A673 (cell line): ENCODE measurements at regions of chr4 and their contacts with region 1.

Region 1: DNA sequence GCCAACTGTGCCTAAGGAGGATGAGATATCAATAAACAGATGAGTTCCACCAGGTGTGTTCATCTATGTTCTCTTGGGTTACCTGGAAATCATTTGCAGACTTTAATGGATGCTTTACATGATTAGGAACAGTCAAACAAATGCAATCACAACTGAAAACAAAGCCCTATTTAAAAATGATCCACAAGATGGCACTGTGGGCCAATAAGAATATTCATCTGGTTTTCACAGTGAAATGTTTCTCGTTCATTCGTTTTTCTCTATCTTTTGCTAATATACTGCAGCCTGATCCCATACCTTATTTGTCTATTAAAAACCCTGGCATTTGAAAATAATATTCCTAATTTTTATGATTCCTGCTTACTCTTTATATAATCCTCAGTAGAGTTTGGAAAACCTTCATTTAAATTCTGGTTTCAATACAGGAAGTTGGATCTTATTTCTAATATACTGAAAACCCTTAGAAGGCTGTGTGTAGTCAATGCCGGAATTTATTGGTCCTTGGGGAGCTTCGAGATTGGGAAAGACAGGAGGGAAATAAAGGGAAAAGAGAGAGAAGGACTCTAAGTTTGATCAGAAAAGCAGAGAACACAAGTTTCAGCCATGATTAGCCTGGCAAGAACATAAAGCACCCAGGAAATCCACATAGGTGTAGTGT is 63.8 kb upstream of the TAPT1 start:
- DNase-seq: peak; percentile 86
- H3K4me3 ChIP-seq: peak overlapping the region; percentile 18
- H3K27ac ChIP-seq: peak overlapping the region; percentile 56
- H3K4me1 ChIP-seq: peaks cover 23% of the 10 kb centered on the region
- H3K27me3 ChIP-seq: no peaks in the 10 kb centered on the region
- CTCF ChIP-seq: peak; percentile 71

Region 2: GRCh38 chr4:15001869-15002658 is 1288.0 kb before region 1 on chr4 and contains the start of gene CPEB2:
- CTCF ChIA-PET with region 1: no interaction called
- POLR2A ChIA-PET with region 1: no interaction called
- intact Hi-C with region 1: no loop called
- DNase-seq: peak; percentile 98
- H3K4me3 ChIP-seq: peak within 1 kb of the TSS; percentile 88
- H3K27ac ChIP-seq: peak within 1 kb of the TSS; percentile 100
- H3K4me1 ChIP-seq: peaks cover 17% of the 10 kb centered on the region
- H3K27me3 ChIP-seq: no peaks in the 10 kb centered on the region
- CTCF ChIP-seq: no peak
- total RNA-seq, gene CPEB2: 75.5 and 80.1 TPM in 2 replicates

Region 3: GRCh38 chr4:15778289-15779241 is 511.5 kb before region 1 on chr4 and contains the start of gene CD38:
- CTCF ChIA-PET with region 1: no interaction called
- POLR2A ChIA-PET with region 1: no interaction called
- intact Hi-C with region 1: no loop called
- DNase-seq: peak; percentile 13
- H3K4me3 ChIP-seq: peak within 1 kb of the TSS; percentile 48
- H3K27ac ChIP-seq: no peak within 1 kb of the TSS
- H3K4me1 ChIP-seq: no peaks in the 10 kb centered on the region
- H3K27me3 ChIP-seq: peaks cover 16% of the 10 kb centered on the region
- CTCF ChIP-seq: no peak
- total RNA-seq, gene CD38: not detected in 2 replicates

Region 4: DNA sequence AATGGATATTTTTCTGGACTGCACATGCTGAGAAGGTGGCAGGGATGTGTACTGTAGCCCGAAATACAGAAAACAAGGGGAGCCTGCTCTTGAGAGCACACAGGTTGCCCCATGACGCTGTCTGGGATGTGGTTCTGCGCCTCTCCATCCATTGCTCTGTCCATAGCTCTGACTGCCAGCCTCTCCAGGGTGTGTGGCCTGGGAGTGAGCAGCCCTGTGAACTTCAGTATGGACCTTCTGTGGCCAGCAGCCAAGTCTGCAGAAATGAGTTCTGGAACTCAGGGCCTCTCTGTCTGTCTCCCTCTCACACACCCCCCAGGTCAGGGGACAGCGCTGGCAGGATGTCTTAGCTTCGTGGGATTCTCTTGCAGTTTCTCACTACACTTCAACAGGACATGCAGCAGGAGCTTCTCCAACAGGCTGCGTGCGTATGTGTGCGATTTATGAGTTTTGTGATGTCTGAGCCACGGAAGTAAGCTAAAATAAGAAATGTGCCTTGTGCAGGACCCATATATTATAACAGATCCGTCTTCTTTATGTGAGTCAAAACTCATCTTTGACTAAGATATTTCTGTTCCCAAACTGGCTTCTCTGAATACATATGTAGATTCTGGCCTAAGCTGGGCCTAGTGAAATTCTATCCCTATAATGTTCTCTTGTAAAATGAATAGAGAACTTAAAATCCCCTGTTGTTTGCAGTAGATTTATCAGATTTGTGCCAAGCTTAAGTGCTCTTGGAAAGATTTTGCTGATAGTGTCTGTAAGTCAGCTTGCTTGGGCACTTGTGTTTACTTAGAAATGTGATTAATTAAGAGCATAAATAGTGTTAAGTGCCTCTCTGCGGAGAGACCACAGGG is 246.2 kb before region 1 on chr4:
- CTCF ChIA-PET with region 1: no interaction called
- POLR2A ChIA-PET with region 1: no interaction called
- intact Hi-C with region 1: no loop called
- DNase-seq: peak; percentile 58
- H3K4me3 ChIP-seq: no peak overlapping the region
- H3K27ac ChIP-seq: no peak overlapping the region
- H3K4me1 ChIP-seq: peaks cover 17% of the 10 kb centered on the region
- H3K27me3 ChIP-seq: no peaks in the 10 kb centered on the region
- CTCF ChIP-seq: no peak

Region 5: DNA sequence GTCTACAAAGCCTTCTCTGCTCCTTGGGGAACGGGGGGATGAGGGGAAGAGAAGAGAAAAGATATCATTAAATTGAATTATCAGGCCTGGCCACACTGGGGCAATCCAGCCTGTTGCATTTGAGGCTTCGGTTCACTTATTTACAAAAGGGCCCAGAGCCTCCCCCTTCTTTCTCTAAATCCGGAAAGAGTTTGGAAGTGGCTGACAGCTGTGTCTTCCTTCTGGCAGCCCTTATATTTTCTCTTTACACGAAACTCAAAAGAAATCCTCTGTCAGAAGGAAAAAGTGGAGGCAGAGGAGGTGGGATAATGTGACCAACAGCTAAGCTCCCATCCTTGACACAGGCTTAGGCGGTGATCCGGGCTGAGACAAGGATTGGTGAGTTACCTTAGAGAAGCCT is 94.5 kb after region 1 on chr4:
- CTCF ChIA-PET with region 1: no interaction called
- POLR2A ChIA-PET with region 1: no interaction called
- intact Hi-C with region 1: loop called (anchors 5 kb)
- DNase-seq: peak; percentile 84
- H3K4me3 ChIP-seq: no peak overlapping the region
- H3K27ac ChIP-seq: peak overlapping the region; percentile 92
- H3K4me1 ChIP-seq: peaks cover 54% of the 10 kb centered on the region
- H3K27me3 ChIP-seq: no peaks in the 10 kb centered on the region
- CTCF ChIP-seq: no peak

Region 6: GRCh38 chr4:16516796-16517439 is 226.9 kb after region 1 on chr4:
- CTCF ChIA-PET with region 1: no interaction called
- POLR2A ChIA-PET with region 1: no interaction called
- intact Hi-C with region 1: loop called (anchors 10 kb)
- DNase-seq: peak; percentile 91
- H3K4me3 ChIP-seq: no peak overlapping the region
- H3K27ac ChIP-seq: no peak overlapping the region
- H3K4me1 ChIP-seq: peaks cover 36% of the 10 kb centered on the region
- H3K27me3 ChIP-seq: no peaks in the 10 kb centered on the region
- CTCF ChIP-seq: peak; percentile 80

Region 7: DNA sequence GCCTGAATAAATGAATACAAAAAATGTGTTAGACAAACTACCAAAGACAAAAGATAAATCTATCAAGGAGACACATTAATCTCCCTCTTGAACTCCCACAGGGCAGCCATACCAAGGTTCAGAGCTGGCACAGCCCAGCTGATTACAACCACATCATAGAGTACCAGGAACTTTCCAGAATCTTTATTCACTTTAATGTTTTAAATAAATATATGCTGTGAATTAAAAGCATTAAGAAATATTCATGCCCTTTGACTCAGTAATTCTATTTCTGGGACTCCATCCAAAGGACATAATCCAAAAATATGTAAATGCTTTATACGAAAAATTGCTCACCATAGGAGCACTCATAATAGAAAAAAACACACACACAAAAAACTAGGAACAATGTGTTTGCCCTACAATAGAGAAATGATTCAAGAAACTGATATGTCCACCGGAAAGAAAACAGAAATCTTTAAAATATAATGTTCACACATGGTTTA is 482.4 kb after region 1 on chr4:
- CTCF ChIA-PET with region 1: no interaction called
- POLR2A ChIA-PET with region 1: no interaction called
- intact Hi-C with region 1: loop called (anchors 10 kb)
- DNase-seq: peak; percentile 65
- H3K4me3 ChIP-seq: no peak overlapping the region
- H3K27ac ChIP-seq: peak overlapping the region; percentile 46
- H3K4me1 ChIP-seq: peaks cover 37% of the 10 kb centered on the region
- H3K27me3 ChIP-seq: no peaks in the 10 kb centered on the region
- CTCF ChIP-seq: no peak

Region 8: GRCh38 chr4:17092736-17093437 is 802.9 kb after region 1 on chr4:
- CTCF ChIA-PET with region 1: no interaction called
- POLR2A ChIA-PET with region 1: no interaction called
- intact Hi-C with region 1: no loop called
- DNase-seq: peak; percentile 24
- H3K4me3 ChIP-seq: no peak overlapping the region
- H3K27ac ChIP-seq: peak overlapping the region; percentile 97
- H3K4me1 ChIP-seq: peaks cover 60% of the 10 kb centered on the region
- H3K27me3 ChIP-seq: no peaks in the 10 kb centered on the region
- CTCF ChIP-seq: no peak

Region 9: DNA sequence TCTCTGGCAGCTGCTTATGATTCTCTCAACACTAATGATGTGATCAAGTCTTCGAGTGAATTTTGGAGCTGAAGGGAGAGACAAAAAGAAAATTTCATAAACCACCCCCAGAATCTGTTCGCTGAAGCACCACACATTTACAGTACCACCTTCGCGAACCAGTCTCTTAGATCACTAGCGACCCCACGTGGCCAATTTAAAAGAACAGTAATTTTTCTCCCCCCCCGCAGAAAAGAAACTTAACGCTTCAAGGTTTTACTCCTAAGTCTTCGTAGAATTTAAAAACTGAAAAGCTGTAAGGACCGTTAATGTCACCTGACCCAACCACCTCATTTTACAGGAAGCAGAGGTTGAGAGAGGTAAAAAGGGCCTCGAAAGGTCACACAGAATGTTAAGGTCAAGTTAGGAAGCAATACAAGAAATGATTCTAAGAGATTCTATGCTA is 1034.4 kb after region 1 on chr4:
- CTCF ChIA-PET with region 1: no interaction called
- POLR2A ChIA-PET with region 1: no interaction called
- intact Hi-C with region 1: loop called (anchors 1 kb)
- DNase-seq: peak; percentile 82
- H3K4me3 ChIP-seq: no peak overlapping the region
- H3K27ac ChIP-seq: peak overlapping the region; percentile 53
- H3K4me1 ChIP-seq: peaks cover 21% of the 10 kb centered on the region
- H3K27me3 ChIP-seq: no peaks in the 10 kb centered on the region
- CTCF ChIP-seq: peak; percentile 83

Region 10: GRCh38 chr4:17469931-17470649 is 1180.1 kb after region 1 on chr4:
- CTCF ChIA-PET with region 1: no interaction called
- POLR2A ChIA-PET with region 1: no interaction called
- intact Hi-C with region 1: loop called (anchors 5 kb)
- DNase-seq: no peak
- H3K4me3 ChIP-seq: no peak overlapping the region
- H3K27ac ChIP-seq: no peak overlapping the region
- H3K4me1 ChIP-seq: no peaks in the 10 kb centered on the region
- H3K27me3 ChIP-seq: no peaks in the 10 kb centered on the region
- CTCF ChIP-seq: no peak